IMR-90 (cell line): ENCODE measurements at regions of chr10 and their contacts with region 1.

Region 1: GRCh38 chr10:38010119-38010903 is at the start of gene ZNF33A:
- DNase-seq: peak; percentile 88
- ATAC-seq: peak; percentile 88
- H3K4me3 ChIP-seq: peak within 1 kb of the TSS; percentile 53
- H3K27ac ChIP-seq: peak within 1 kb of the TSS; percentile 72
- H3K4me1 ChIP-seq: no peaks in the 10 kb centered on the region
- H3K27me3 ChIP-seq: no peaks in the 10 kb centered on the region
- CTCF ChIP-seq: no peak
- POLR2A ChIP-seq: no peak
- RAD21 ChIP-seq: no peak
- total RNA-seq, gene ZNF33A: 11.4 and 14.3 TPM in 2 replicates

Region 2: GRCh38 chr10:37976091-37976879 is 34.0 kb before region 1 on chr10 and contains the start of gene ZNF25:
- CTCF ChIA-PET with region 1: no interaction called
- POLR2A ChIA-PET with region 1: no interaction called
- dilution Hi-C with region 1: no loop called
- in situ Hi-C with region 1: no loop called
- intact Hi-C with region 1: loop called (anchors 1 kb)
- DNase-seq: peak; percentile 98
- ATAC-seq: peak; percentile 97
- H3K4me3 ChIP-seq: peak within 1 kb of the TSS; percentile 77
- H3K27ac ChIP-seq: peak within 1 kb of the TSS; percentile 62
- H3K4me1 ChIP-seq: no peaks in the 10 kb centered on the region
- H3K27me3 ChIP-seq: no peaks in the 10 kb centered on the region
- CTCF ChIP-seq: peak; percentile 99
- POLR2A ChIP-seq: peak; percentile 76
- RAD21 ChIP-seq: peak; percentile 77
- total RNA-seq, gene ZNF25: 9.5 and 12.2 TPM in 2 replicates

Region 3: DNA sequence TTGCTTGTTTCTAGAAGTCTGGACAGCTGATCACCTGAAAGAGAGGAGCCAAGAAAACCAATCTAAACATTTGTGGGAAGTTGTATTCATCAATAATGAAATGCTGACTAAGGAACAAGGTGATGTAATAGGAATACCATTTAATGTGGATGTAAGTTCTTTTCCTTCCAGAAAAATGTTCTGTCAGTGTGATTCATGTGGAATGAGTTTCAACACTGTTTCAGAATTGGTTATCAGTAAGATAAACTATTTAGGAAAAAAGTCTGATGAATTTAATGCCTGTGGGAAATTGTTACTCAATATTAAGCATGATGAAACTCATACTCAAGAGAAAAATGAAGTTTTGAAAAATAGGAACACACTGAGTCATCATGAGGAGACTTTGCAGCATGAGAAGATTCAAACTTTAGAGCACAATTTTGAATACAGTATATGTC is 44.1 kb after region 1 on chr10:
- CTCF ChIA-PET with region 1: no interaction called
- POLR2A ChIA-PET with region 1: no interaction called
- dilution Hi-C with region 1: no loop called
- in situ Hi-C with region 1: no loop called
- intact Hi-C with region 1: loop called (anchors 1 kb)
- DNase-seq: peak; percentile 93
- ATAC-seq: peak; percentile 88
- H3K4me3 ChIP-seq: no peak overlapping the region
- H3K27ac ChIP-seq: no peak overlapping the region; the same call in 1 of the 2 replicates
- H3K4me1 ChIP-seq: 0 out of 2 replicates have a peak, but pooled peaks cover 1% of the 10 kb centered on the region
- H3K27me3 ChIP-seq: no peaks in the 10 kb centered on the region
- CTCF ChIP-seq: no peak
- POLR2A ChIP-seq: no peak
- RAD21 ChIP-seq: no peak

Region 4: DNA sequence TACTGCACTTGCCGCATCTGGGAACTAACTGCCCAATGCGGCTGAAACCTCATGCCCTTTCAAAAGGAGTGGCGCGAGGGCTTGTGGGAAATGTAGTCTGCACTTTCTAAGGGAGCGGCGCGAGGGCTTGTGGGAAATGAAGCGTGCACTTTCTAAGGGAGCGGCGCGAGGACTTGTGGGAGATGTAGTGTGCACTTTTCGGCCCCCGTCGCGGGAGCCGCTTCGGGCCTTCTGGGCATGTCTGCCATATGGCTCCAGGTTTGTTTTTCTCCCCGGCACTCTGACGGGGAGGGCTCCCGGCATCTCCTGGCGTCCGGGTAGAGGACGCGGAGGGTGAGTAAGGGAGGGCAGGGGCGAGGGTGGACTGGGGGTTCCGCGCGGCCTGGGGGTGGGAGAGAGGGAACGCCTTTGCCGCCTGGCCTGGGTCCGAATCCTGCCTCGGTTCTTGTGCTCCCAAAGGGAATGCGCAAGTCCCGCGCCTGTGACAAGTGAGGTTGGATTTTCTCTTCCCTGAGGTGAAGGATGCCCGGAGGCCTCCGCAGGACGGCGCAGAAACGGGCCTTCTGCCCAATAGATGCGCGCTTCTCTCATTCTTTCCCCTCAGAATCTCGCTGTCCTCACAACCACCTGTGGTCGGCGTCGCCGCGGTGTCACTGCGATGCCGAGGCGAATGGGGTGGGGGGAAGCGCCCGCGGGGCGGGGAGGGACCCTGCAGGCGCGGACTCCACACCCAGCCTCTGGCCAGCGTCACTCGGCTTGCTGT is 84.0 kb after region 1 on chr10 and contains the start of gene ZNF37A:
- CTCF ChIA-PET with region 1: no interaction called
- POLR2A ChIA-PET with region 1: no interaction called
- dilution Hi-C with region 1: no loop called
- in situ Hi-C with region 1: no loop called
- intact Hi-C with region 1: loop called (anchors 1 kb)
- DNase-seq: peak; percentile 97
- ATAC-seq: peak; percentile 98
- H3K4me3 ChIP-seq: peak within 1 kb of the TSS; percentile 71
- H3K27ac ChIP-seq: peak within 1 kb of the TSS; percentile 83
- H3K4me1 ChIP-seq: no peaks in the 10 kb centered on the region; the same call in 1 of the 2 replicates
- H3K27me3 ChIP-seq: no peaks in the 10 kb centered on the region
- CTCF ChIP-seq: no peak
- POLR2A ChIP-seq: 0 out of 2 replicates have a peak, but pooled peaks have one; percentile 49
- RAD21 ChIP-seq: no peak
- total RNA-seq, gene ZNF37A: 8.6 and 10.0 TPM in 2 replicates